ENCODE measurements at regions of chr17 and their contacts with region 1.

Region 1: GRCh38 chr17:14398766-14399165 is 97.9 kb downstream of the HS3ST3B1 start:
- DNase-seq: no peak
- H3K4me3 Mint-ChIP-seq: no peak overlapping the region
- H3K27ac Mint-ChIP-seq: no peak overlapping the region
- H3K4me1 Mint-ChIP-seq: peaks cover 7% of the 10 kb centered on the region
- H3K27me3 Mint-ChIP-seq: no peaks in the 10 kb centered on the region

Region 2: DNA sequence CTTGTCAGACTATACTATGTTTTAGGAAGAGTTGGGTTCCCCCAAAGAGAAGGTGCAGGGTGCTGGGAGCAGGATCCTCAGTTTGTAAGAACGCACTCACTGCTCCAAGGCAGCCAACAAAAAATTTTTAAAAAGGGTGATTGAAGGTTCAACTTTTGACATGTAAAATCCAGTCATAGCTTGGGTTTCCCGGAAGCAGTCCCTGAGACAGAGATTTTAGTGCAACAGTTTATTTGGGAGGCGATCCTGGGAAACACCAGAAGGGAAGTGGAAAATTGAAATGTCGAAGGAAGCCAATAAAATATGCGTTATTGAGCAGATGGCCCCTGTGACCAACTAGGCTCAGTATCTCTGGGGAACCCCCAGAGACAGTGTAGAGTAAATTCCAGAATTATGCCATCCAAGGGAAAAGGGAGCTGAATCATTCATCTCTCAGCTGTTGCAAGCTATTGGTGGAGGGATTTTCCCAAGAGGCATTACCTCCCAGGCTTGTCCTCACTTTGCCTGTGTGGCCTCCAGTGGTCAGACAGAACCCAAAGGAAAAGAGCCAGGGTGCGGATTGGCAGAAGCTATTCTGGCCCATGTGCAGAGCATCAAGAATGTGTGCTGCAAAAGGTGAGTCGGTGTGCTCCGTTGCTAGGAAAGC is 25.0 kb before region 1 on chr17:
- intact Hi-C with region 1: no loop called
- DNase-seq: no peak
- H3K4me3 Mint-ChIP-seq: no peak overlapping the region
- H3K27ac Mint-ChIP-seq: no peak overlapping the region
- H3K4me1 Mint-ChIP-seq: no peaks in the 10 kb centered on the region
- H3K27me3 Mint-ChIP-seq: peaks cover 1% of the 10 kb centered on the region

Region 3: GRCh38 chr17:14427900-14428647 is 29.3 kb after region 1 on chr17:
- intact Hi-C with region 1: loop called (anchors 1 kb)
- DNase-seq: peak; percentile 28
- H3K4me3 Mint-ChIP-seq: peak overlapping the region; percentile 54
- H3K27ac Mint-ChIP-seq: peak overlapping the region; percentile 82
- H3K4me1 Mint-ChIP-seq: peaks cover 32% of the 10 kb centered on the region
- H3K27me3 Mint-ChIP-seq: no peaks in the 10 kb centered on the region

Measured in activated T-helper 2 cell treated with anti-CD3 and anti-CD28 coated beads, Interferon-gamma antibody, Interleukin-2, Interleukin-4, amounts not matched to agents 10 μg/mL and 5 μg/mL and 100 μg/mL, durations not matched to agents 14 hours and 24 hours and 36 hours (primary cell).